ENCODE measurements at regions of chrX and their contacts with region 1.

Region 1: GRCh38 chrX:119235872-119236622 is at the start of gene PGRMC1:
- DNase-seq: peak; percentile 24 to 88
- H3K4me3 ChIP-seq: peak within 1 kb of the TSS; percentile 71 to 76
- H3K27ac ChIP-seq: peak within 1 kb of the TSS; percentile 87 to 88
- H3K4me1 ChIP-seq: no peaks in the 10 kb centered on the region
- H3K27me3 ChIP-seq: no peaks in the 10 kb centered on the region
- CTCF ChIP-seq: peak in 1 of 3 experiments; percentile 3
- total RNA-seq, gene PGRMC1: 117 TPM

Region 2: GRCh38 chrX:118855681-118856310 is 380.3 kb before region 1 on chrX:
- intact Hi-C with region 1: loop called (anchors 5 kb)
- DNase-seq: no peak
- H3K4me3 ChIP-seq: no peak overlapping the region
- H3K27ac ChIP-seq: no peak overlapping the region
- H3K4me1 ChIP-seq: no peaks in the 10 kb centered on the region
- H3K27me3 ChIP-seq: no peaks in the 10 kb centered on the region
- CTCF ChIP-seq: no peak

Region 3: DNA sequence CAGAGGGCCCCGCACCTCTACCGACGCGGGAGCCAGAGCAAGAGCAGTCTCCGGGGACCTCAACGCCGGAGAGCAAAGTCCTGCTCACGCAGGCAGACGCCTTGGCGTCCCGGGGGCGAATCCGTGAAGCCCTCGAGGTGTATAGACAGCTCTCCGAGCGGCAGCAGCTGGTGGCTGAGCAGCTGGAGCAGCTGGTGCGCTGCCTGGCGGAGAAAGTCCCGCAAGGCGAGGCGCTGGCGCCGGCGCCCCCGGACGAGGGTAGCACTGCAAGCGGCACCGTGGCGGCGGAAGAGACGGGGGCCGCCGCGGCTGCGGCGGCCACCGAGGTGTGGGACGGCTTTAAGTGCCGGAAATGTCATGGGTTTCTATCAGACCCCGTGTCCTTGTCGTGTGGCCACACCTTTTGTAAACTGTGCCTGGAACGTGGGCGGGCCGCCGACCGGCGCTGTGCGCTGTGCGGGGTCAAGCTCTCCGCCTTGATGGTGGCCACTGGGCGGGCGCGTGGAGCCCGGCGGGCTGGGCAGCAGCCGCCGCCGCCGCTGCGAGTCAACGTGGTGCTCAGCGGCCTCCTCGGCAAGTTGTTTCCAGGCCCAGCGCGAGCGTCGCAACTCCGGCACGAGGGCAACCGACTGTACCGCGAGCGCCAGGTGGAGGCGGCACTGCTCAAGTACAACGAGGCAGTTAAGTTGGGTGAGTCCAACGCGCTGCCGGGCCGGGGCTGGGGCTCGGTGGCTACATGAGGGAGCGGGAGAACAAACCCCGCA is 261.0 kb before region 1 on chrX:
- intact Hi-C with region 1: loop called (anchors 5 kb)
- DNase-seq: peak in 1 of 2 donors; percentile 66
- H3K4me3 ChIP-seq: peak overlapping the region; percentile 77 to 83
- H3K27ac ChIP-seq: peak overlapping the region; percentile 76 to 87
- H3K4me1 ChIP-seq: no peaks in the 10 kb centered on the region
- H3K27me3 ChIP-seq: no peaks in the 10 kb centered on the region
- CTCF ChIP-seq: no peak

Region 4: DNA sequence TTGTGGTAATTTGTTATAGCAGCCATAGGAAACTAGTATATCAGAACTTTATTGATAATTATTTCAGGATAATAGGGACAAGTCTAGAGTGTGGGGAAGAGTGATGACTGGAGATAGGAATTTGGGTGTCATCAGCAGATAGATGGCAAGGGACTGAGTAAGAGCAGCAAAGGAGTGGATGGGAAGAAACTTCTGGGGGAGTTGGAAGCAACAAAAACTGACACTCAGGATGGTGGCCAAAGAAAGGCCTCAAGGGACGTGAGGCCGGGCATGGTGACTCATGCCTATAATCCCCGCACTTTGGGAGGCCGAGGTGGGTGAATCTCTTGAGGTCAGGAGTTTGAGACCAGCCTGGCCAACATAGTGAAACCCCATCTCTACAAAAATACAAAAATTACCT is 223.1 kb after region 1 on chrX:
- intact Hi-C with region 1: no loop called
- DNase-seq: no peak
- H3K4me3 ChIP-seq: no peak overlapping the region
- H3K27ac ChIP-seq: no peak overlapping the region
- H3K4me1 ChIP-seq: no peaks in the 10 kb centered on the region
- H3K27me3 ChIP-seq: no peaks in the 10 kb centered on the region
- CTCF ChIP-seq: no peak

Region 5: DNA sequence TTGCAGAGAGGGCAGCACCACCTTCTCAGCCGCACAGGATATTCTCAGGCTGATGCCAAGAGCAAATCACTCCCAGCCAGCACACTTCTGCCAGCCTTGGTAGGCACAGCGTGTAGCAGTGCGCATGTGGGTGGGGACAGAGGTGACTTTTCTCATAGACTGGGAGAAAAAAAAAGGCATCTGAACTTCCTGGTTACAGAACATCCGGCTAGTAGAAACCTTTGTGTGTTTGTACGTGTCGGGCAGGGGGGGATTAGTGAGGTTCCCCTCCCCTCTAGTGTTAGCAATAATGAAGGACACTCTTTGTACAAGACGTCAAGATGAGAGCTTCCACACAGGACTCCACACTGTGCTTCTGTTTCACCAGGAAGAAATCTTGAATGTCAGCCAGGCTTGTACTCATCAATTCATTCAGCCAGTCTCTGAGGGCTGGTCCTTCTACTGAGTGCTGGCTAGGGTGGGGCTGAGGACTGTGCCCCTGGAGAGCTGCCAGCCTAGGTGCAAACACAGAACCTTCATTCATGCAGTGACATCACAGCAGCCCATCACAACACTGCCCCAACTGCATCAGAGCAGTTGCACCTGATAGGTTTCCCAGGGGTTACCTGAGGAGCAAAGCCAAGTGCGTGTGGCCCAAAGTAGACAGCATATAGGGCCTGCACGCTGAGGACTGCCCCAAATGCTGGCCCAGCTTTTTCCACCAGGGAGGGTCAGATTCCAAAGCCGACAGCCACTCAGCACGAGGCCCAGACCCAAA is 266.9 kb after region 1 on chrX:
- intact Hi-C with region 1: loop called (anchors 5 kb)
- DNase-seq: no peak
- H3K4me3 ChIP-seq: no peak overlapping the region
- H3K27ac ChIP-seq: peak overlapping the region; percentile 67 to 90
- H3K4me1 ChIP-seq: peaks cover 0 to 11% of the 10 kb centered on the region in 2 donors
- H3K27me3 ChIP-seq: no peaks in the 10 kb centered on the region
- CTCF ChIP-seq: no peak

Region 6: DNA sequence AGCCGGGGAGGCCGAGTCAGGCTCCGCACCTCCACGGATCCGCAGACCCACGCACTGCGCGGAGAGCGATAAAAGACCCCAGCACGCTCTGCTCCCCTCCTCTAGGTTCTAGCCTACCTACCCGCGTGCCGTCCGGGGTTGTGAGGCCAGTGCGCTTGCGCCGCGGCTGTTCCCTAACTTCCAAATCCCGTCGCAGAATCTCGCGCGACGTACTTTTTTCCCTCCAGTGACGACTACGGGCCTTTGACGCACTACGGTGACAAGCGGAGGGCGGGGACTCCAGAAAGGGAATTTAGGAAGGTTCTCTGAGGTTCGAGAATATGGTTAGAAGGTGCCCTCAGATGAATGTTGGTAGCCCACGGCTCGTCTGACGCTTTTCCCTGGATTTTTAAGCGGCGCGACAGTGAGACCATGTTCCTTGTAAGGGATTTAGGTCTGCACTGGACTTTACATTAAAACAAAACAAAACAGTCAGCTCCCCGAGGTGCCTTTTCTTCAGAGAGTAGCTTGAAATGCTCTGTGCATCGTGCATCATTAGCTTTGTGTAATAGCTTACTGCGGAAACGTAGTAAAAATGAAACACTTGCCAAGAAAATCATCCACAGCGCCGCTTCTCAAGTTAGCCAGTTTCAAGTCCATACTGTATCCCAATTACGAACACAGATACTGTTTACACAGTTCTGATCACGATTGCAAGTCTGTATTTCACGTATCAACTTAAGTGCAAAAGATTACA is 370.4 kb after region 1 on chrX and contains the start of gene NKRF:
- intact Hi-C with region 1: loop called (anchors 5 kb)
- DNase-seq: peak; percentile 68 to 95
- H3K4me3 ChIP-seq: peak within 1 kb of the TSS; percentile 63 to 77
- H3K27ac ChIP-seq: peak within 1 kb of the TSS; percentile 69 to 79
- H3K4me1 ChIP-seq: no peaks in the 10 kb centered on the region
- H3K27me3 ChIP-seq: no peaks in the 10 kb centered on the region
- CTCF ChIP-seq: no peak
- total RNA-seq, gene NKRF: 2.8 TPM

Region 7: DNA sequence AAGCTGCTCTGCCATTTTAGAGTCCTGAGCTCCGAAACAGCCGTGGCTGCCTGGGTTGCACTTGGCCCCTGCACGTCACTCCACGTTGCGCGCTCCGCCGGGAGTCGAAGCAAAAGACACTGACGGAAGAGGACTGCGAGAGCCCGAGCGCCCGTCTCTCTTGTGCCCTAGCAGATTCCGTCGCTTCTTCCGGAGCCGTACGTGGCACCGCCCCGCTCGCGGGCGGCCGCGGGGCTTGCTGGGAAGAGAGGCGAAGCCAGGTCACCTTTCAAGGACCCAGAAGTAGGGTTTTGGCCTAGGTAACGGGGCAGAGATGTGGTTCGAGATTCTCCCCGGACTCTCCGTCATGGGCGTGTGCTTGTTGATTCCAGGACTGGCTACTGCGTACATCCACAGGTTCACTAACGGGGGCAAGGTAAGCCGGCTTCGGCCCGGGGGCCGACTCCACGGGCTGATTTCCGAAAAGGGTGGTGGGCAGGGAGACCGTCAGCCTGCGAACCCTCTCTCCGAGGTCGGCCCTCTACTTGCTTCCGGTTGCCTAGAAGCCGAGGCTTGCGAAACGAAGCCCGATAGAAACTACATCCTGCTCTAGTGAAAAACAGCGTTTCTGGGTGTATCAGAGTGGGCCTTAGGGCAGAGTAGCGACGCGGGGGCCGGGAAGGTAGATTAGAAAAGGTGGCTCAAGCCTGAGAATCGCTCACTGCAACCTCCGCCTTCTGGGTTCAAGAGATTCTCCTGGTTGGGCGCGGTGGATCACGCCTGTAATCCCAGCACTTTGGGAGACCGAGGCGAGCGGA is 635.8 kb after region 1 on chrX and contains the starts of genes NDUFA1 and RNF113A:
- intact Hi-C with region 1: loop called (anchors 10 kb)
- DNase-seq: peak; percentile 31 to 89
- H3K4me3 ChIP-seq: peak within 1 kb of the TSS; percentile 54 to 66
- H3K27ac ChIP-seq: peak within 1 kb of the TSS; percentile 90 to 93
- H3K4me1 ChIP-seq: peaks cover 0 to 5% of the 10 kb centered on the region in 2 donors
- H3K27me3 ChIP-seq: no peaks in the 10 kb centered on the region
- CTCF ChIP-seq: no peak
- total RNA-seq, gene NDUFA1: 24.5 TPM
- total RNA-seq, gene RNF113A: 8.8 TPM

Measured in ascending aorta (tissue), 2 donors.